A673 (cell line): ENCODE measurements at regions of chr3 and their contacts with region 1.

Region 1: DNA sequence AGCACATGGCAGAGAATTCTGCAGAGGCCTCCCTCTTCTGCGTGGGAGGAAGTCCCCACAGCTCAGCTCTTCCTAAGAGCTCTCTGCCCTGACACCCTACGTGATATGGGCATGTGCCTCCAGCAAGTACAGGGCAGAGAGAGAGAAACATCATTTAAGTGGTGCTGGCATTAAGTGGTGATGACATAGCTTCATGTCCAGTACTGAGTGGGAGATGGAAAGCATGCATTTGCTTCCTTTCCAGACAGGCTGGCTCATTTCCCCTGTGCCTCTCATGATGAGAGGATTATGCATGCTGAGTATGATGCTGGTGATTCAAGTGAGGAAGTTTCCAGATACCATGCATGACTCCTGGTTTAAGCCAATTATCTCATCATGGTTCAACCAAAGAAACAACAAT is 26.9 kb downstream of the BFSP2 start:
- DNase-seq: peak; percentile 84
- H3K4me3 ChIP-seq: no peak overlapping the region
- H3K27ac ChIP-seq: no peak overlapping the region
- H3K4me1 ChIP-seq: peaks cover 8% of the 10 kb centered on the region
- H3K27me3 ChIP-seq: no peaks in the 10 kb centered on the region
- CTCF ChIP-seq: no peak

Region 2: GRCh38 chr3:132730891-132731580 is 695.7 kb before region 1 on chr3:
- CTCF ChIA-PET with region 1: interaction called, 13 read pairs
- POLR2A ChIA-PET with region 1: no interaction called
- intact Hi-C with region 1: loop called (anchors 1 kb)
- DNase-seq: peak; percentile 61
- H3K4me3 ChIP-seq: no peak overlapping the region
- H3K27ac ChIP-seq: no peak overlapping the region
- H3K4me1 ChIP-seq: no peaks in the 10 kb centered on the region
- H3K27me3 ChIP-seq: peaks cover 42% of the 10 kb centered on the region
- CTCF ChIP-seq: peak; percentile 57

Region 3: GRCh38 chr3:133317866-133318265 is 108.9 kb before region 1 on chr3:
- CTCF ChIA-PET with region 1: interaction called, 12 read pairs
- POLR2A ChIA-PET with region 1: no interaction called
- intact Hi-C with region 1: no loop called
- DNase-seq: no peak
- H3K4me3 ChIP-seq: no peak overlapping the region
- H3K27ac ChIP-seq: no peak overlapping the region
- H3K4me1 ChIP-seq: peaks cover 5% of the 10 kb centered on the region
- H3K27me3 ChIP-seq: peaks cover 58% of the 10 kb centered on the region
- CTCF ChIP-seq: no peak

Region 4: GRCh38 chr3:133464573-133464972 is 37.9 kb after region 1 on chr3:
- CTCF ChIA-PET with region 1: no interaction called
- POLR2A ChIA-PET with region 1: no interaction called
- intact Hi-C with region 1: no loop called
- DNase-seq: peak; percentile 56
- H3K4me3 ChIP-seq: no peak overlapping the region
- H3K27ac ChIP-seq: no peak overlapping the region
- H3K4me1 ChIP-seq: no peaks in the 10 kb centered on the region
- H3K27me3 ChIP-seq: no peaks in the 10 kb centered on the region
- CTCF ChIP-seq: no peak; the same call in 1 of the 2 replicates